ENCODE measurements at regions of chr19 and their contacts with region 1.

Region 1: GRCh38 chr19:12564016-12564664 is 12.9 kb upstream of the ZNF564 start:
- DNase-seq: peak; percentile 83 to 95 (median 92)
- H3K4me3 ChIP-seq: peak overlapping the region in 49 of 59 donors; percentile 4 to 51 (median 36)
- H3K27ac ChIP-seq: peak overlapping the region in 51 of 59 donors; percentile 26 to 92 (median 76)
- H3K27me3 ChIP-seq: no peaks in the 10 kb centered on the region
- CTCF ChIP-seq: peak; percentile 85 to 98 (median 94)

Region 2: GRCh38 chr19:12666265-12667048 is 102.3 kb after region 1 on chr19 and contains the starts of genes MAN2B1 and WDR83:
- intact Hi-C with region 1: loop called (anchors 5 kb)
- DNase-seq: peak in 9 of 10 donors; percentile 48 to 83 (median 65)
- H3K4me3 ChIP-seq: peak within 1 kb of the TSS; percentile 66 to 100 (median 92)
- H3K27ac ChIP-seq: peak within 1 kb of the TSS in 54 of 59 donors; percentile 21 to 89 (median 74)
- H3K27me3 ChIP-seq: no peaks in the 10 kb centered on the region
- CTCF ChIP-seq: peak in 2 of 56 donors; percentile 12 to 13
- total RNA-seq, gene MAN2B1: 16.5 to 62.2 (median 32.8) TPM
- total RNA-seq, gene WDR83: 11.8 to 30.1 (median 19.5) TPM